ENCODE measurements at regions of chr17 and their contacts with region 1.

Region 1: GRCh38 chr17:51056813-51057510 is 63.7 kb downstream of the SPAG9 start:
- DNase-seq: no peak
- ATAC-seq: peak; percentile 86
- H3K4me3 ChIP-seq: no peak overlapping the region
- H3K27ac ChIP-seq: no peak overlapping the region
- H3K4me1 ChIP-seq: peaks cover 24% of the 10 kb centered on the region
- H3K27me3 ChIP-seq: no peaks in the 10 kb centered on the region
- CTCF ChIP-seq: peak; percentile 57 to 71 (median 71)
- EP300 ChIP-seq: no peak
- POLR2A ChIP-seq: no peak
- RAD21 ChIP-seq: peak; percentile 87

Region 2: GRCh38 chr17:50919321-50920085 is 137.5 kb before region 1 on chr17:
- CTCF ChIA-PET with region 1: no interaction called
- POLR2A ChIA-PET with region 1: no interaction called
- RAD21 ChIA-PET with region 1: no interaction called
- SMC1A ChIA-PET with region 1: no interaction called
- in situ Hi-C with region 1: no loop called
- intact Hi-C with region 1: no loop called
- DNase-seq: no peak
- ATAC-seq: peak; percentile 92
- H3K4me3 ChIP-seq: no peak overlapping the region
- H3K27ac ChIP-seq: no peak overlapping the region
- H3K4me1 ChIP-seq: peaks cover 20% of the 10 kb centered on the region
- H3K27me3 ChIP-seq: no peaks in the 10 kb centered on the region
- CTCF ChIP-seq: no peak
- EP300 ChIP-seq: no peak
- POLR2A ChIP-seq: no peak
- RAD21 ChIP-seq: no peak

Region 3: DNA sequence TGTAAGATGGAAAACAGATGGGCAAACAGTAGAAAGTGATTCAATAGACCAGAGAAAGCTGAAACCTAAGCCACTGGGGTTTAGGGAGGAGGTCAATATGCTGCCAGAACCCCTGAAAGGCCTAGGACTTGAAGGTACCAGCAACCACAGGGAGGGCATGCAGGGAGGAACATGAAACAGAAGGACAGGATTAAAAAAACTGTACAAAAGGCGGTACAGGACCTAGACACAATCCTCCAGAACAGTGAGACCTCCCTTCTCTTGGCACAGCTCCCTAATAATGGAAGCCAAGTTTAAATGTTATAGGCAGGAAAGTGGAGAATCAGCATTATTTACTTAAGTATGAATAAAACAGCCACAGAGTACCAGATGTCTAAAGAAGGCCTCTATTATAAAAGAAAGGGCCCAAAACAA is 41.8 kb before region 1 on chr17:
- CTCF ChIA-PET with region 1: interaction called, 472 read pairs
- POLR2A ChIA-PET with region 1: no interaction called
- RAD21 ChIA-PET with region 1: interaction called, 7 read pairs
- SMC1A ChIA-PET with region 1: interaction called, 12 read pairs
- in situ Hi-C with region 1: no loop called
- intact Hi-C with region 1: no loop called
- DNase-seq: no peak
- ATAC-seq: no peak
- H3K4me3 ChIP-seq: no peak overlapping the region
- H3K27ac ChIP-seq: peak overlapping the region; percentile 42; the same call in 1 of the 2 replicates
- H3K4me1 ChIP-seq: no peaks in the 10 kb centered on the region
- H3K27me3 ChIP-seq: no peaks in the 10 kb centered on the region
- CTCF ChIP-seq: no peak
- EP300 ChIP-seq: no peak
- POLR2A ChIP-seq: no peak
- RAD21 ChIP-seq: no peak

Region 4: GRCh38 chr17:51029568-51030463 is 27.1 kb before region 1 on chr17:
- CTCF ChIA-PET with region 1: interaction called, 73 read pairs
- POLR2A ChIA-PET with region 1: interaction called, 11 read pairs
- RAD21 ChIA-PET with region 1: interaction called, 10 read pairs
- SMC1A ChIA-PET with region 1: interaction called, 24 read pairs
- in situ Hi-C with region 1: no loop called
- intact Hi-C with region 1: no loop called
- DNase-seq: no peak
- ATAC-seq: peak; percentile 87
- H3K4me3 ChIP-seq: no peak overlapping the region
- H3K27ac ChIP-seq: peak overlapping the region; percentile 51
- H3K4me1 ChIP-seq: peaks cover 5% of the 10 kb centered on the region
- H3K27me3 ChIP-seq: no peaks in the 10 kb centered on the region
- CTCF ChIP-seq: no peak
- EP300 ChIP-seq: 0 out of 4 replicates have a peak, but pooled peaks of 1 of the 2 experiments have one; percentile 9
- POLR2A ChIP-seq: no peak
- RAD21 ChIP-seq: no peak

Region 5: DNA sequence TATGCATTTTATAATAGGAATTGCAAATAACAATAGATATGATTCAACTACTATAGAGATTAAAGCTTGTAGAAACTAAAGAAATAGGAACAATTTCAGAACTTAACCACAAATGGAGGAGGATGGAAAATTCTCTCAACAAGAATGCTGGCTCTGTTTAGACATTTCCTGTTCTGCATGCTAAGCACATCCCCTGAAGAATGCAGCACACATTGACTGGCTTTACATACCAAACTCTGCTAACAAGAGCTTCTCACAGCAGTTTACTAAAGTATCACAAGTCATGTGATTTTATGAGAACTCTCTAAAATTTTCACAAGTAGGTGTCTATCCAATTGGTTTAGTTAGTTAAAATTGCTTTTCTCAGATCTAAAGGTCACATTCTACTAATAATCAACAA is 21.5 kb before region 1 on chr17:
- CTCF ChIA-PET with region 1: interaction called, 73 read pairs
- POLR2A ChIA-PET with region 1: interaction called, 3 read pairs
- RAD21 ChIA-PET with region 1: interaction called, 10 read pairs
- SMC1A ChIA-PET with region 1: interaction called, 92 read pairs
- in situ Hi-C with region 1: no loop called
- intact Hi-C with region 1: no loop called
- DNase-seq: no peak
- ATAC-seq: no peak; the same call in 2 of the 3 replicates
- H3K4me3 ChIP-seq: no peak overlapping the region
- H3K27ac ChIP-seq: no peak overlapping the region; the same call in 1 of the 2 replicates
- H3K4me1 ChIP-seq: peaks cover 7% of the 10 kb centered on the region
- H3K27me3 ChIP-seq: no peaks in the 10 kb centered on the region
- CTCF ChIP-seq: no peak
- EP300 ChIP-seq: no peak
- POLR2A ChIP-seq: no peak
- RAD21 ChIP-seq: no peak

Region 6: GRCh38 chr17:51046514-51047384 is 10.2 kb before region 1 on chr17:
- CTCF ChIA-PET with region 1: interaction called, 38 read pairs
- POLR2A ChIA-PET with region 1: interaction called, 6 read pairs
- RAD21 ChIA-PET with region 1: interaction called, 28 read pairs
- SMC1A ChIA-PET with region 1: interaction called, 92 read pairs
- in situ Hi-C with region 1: no loop called
- intact Hi-C with region 1: no loop called
- DNase-seq: no peak
- ATAC-seq: no peak
- H3K4me3 ChIP-seq: no peak overlapping the region
- H3K27ac ChIP-seq: no peak overlapping the region
- H3K4me1 ChIP-seq: peaks cover 29% of the 10 kb centered on the region
- H3K27me3 ChIP-seq: no peaks in the 10 kb centered on the region
- CTCF ChIP-seq: no peak
- EP300 ChIP-seq: no peak
- POLR2A ChIP-seq: no peak
- RAD21 ChIP-seq: no peak

Region 7: DNA sequence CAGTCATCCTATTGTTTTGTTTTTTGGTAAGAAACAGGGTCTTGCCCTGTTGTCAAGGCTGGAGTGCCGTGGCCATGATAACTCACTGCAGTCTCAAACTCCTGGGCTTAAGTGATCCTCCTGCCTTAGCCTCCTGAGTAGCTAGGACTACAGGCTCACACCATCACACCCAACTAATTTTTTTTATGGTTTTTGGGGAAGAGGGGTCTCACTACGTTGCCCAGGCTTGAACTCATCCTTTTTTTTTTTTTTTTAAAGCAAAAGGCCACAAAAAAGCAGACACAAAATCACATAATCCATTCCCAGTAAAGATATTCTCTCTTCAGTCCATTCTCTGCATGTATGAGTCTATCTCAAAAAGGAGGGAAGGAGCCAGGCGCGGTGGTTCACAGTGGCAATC is 58.2 kb after region 1 on chr17:
- CTCF ChIA-PET with region 1: interaction called, 14 read pairs
- POLR2A ChIA-PET with region 1: interaction called, 8 read pairs
- RAD21 ChIA-PET with region 1: interaction called, 9 read pairs
- SMC1A ChIA-PET with region 1: interaction called, 4 read pairs
- in situ Hi-C with region 1: no loop called
- intact Hi-C with region 1: no loop called
- DNase-seq: no peak
- ATAC-seq: no peak
- H3K4me3 ChIP-seq: no peak overlapping the region
- H3K27ac ChIP-seq: no peak overlapping the region; the same call in 1 of the 2 replicates
- H3K4me1 ChIP-seq: peaks cover 10% of the 10 kb centered on the region; the same call in 1 of the 2 replicates
- H3K27me3 ChIP-seq: no peaks in the 10 kb centered on the region
- CTCF ChIP-seq: no peak
- EP300 ChIP-seq: no peak
- POLR2A ChIP-seq: no peak
- RAD21 ChIP-seq: no peak

Region 8: DNA sequence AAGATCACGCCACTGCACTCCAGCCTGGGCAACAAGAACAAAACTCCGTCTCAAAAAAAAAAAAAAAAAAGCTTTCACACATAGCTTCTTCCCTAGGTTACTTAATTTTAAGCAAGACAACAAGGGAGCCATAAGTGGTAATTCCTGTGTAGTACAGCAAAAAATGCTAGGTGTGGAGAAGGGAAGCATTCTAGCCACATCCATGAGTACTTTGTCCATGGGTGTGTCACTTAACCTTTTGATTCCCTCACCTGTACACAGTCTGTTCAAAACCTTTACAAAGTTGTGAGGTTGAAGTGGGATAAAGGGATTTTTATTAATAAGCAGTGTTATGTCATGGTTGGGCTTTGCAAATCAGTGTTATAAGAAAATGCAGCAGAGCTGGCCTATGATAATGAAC is 113.8 kb after region 1 on chr17:
- CTCF ChIA-PET with region 1: no interaction called
- POLR2A ChIA-PET with region 1: no interaction called
- RAD21 ChIA-PET with region 1: no interaction called
- SMC1A ChIA-PET with region 1: no interaction called
- in situ Hi-C with region 1: no loop called
- intact Hi-C with region 1: no loop called
- DNase-seq: no peak
- ATAC-seq: no peak
- H3K4me3 ChIP-seq: no peak overlapping the region
- H3K27ac ChIP-seq: no peak overlapping the region
- H3K4me1 ChIP-seq: peaks cover 6% of the 10 kb centered on the region
- H3K27me3 ChIP-seq: no peaks in the 10 kb centered on the region
- CTCF ChIP-seq: no peak
- EP300 ChIP-seq: no peak
- POLR2A ChIP-seq: no peak
- RAD21 ChIP-seq: no peak

Region 9: GRCh38 chr17:51381262-51381661 is 324.3 kb after region 1 on chr17:
- CTCF ChIA-PET with region 1: no interaction called
- POLR2A ChIA-PET with region 1: no interaction called
- RAD21 ChIA-PET with region 1: no interaction called
- SMC1A ChIA-PET with region 1: no interaction called
- in situ Hi-C with region 1: no loop called
- intact Hi-C with region 1: no loop called
- DNase-seq: no peak
- ATAC-seq: no peak
- H3K4me3 ChIP-seq: no peak overlapping the region
- H3K27ac ChIP-seq: no peak overlapping the region
- H3K4me1 ChIP-seq: no peaks in the 10 kb centered on the region
- H3K27me3 ChIP-seq: peaks cover 2% of the 10 kb centered on the region in 2 experiments; a peak in 1 of 4 replicates
- CTCF ChIP-seq: no peak
- EP300 ChIP-seq: no peak
- POLR2A ChIP-seq: no peak
- RAD21 ChIP-seq: no peak

Measured in GM12878 (cell line).